Gastrocnemius medialis (tissue), 4 donors: ENCODE measurements at regions of chr2 and their contacts with region 1.

Region 1: DNA sequence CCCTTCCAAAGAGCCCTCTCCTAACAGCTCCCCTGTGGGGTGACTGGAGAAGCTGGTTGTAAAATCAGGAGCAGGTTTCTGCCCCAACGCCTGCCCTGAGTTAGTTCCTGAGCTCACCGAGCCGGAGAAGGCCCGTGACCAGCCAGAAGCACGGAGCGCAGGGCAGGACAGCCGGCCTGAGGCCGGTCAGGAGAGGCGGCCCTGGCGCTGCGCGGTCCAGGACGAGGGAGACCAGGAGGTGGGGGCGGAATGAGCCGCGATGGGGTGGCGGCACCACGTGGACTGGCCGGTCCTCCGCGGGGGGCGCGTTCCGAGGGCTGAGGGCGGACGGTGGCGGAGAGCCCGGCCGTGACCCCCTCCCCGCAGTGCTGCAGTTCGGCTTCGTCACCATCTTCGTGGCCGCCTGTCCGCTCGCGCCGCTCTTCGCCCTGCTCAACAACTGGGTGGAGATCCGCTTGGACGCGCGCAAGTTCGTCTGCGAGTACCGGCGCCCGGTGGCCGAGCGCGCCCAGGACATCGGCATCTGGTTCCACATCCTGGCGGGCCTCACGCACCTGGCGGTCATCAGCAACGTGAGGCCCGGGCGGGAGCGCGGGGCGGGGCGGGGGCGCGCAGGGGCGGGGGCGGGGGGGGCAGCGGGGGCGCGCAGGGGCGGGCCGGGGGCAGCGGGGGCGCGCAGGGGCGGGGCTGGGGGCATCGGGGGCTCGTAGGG is 29.0 kb downstream of the ANO7 start:
- DNase-seq: peak; percentile 29 to 74
- ATAC-seq: peak; percentile 69 to 81
- H3K4me3 ChIP-seq: peak overlapping the region; percentile 57 to 69 (median 63)
- H3K27ac ChIP-seq: peak overlapping the region; percentile 73 to 94 (median 79)
- H3K4me1 ChIP-seq: peaks cover 4 to 16% of the 10 kb centered on the region in 2 donors
- H3K27me3 ChIP-seq: no peaks in the 10 kb centered on the region
- CTCF ChIP-seq: peak in 1 of 5 experiments; percentile 13
- POLR2A ChIP-seq: no peak

Region 2: DNA sequence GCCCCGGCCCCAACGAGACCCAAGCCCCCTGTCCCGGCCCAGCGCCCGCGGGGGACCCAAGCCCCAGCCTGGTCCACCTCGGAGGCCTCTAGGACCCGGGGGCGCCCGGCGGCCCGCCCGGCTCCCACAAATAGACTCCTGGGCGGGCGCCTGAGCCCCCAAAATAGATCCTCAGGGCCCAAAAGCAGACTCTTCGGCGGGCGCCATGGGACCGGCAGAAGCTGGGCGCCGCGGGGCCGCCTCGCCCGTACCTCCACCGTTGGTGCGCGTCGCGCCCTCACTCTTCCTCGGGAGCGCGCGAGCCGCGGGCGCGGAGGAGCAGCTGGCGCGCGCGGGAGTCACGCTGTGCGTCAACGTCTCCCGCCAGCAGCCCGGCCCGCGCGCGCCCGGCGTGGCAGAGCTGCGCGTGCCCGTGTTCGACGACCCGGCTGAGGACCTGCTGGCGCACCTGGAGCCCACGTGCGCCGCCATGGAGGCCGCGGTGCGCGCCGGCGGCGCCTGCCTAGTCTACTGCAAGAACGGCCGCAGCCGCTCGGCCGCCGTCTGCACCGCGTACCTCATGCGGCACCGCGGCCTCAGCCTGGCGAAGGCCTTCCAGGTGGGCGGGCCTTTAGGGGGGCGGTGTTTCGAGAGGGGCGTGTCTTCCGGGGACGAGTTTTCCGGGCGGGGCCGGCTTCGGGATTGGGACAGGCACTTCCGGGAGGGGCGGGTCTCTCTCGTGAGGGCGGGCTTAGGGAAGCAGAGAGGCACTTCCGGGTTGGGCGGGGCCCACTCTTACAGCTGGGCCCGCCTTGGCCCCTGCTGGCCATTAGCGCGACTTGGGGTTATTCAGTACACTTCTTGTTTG is 656.8 kb before region 1 on chr2:
- in situ Hi-C with region 1: no loop called
- intact Hi-C with region 1: loop called (anchors 5 kb)
- DNase-seq: peak; percentile 99
- ATAC-seq: peak; percentile 85 to 86
- H3K4me3 ChIP-seq: peak overlapping the region; percentile 77 to 94 (median 88)
- H3K27ac ChIP-seq: peak overlapping the region; percentile 97 to 100 (median 100)
- H3K4me1 ChIP-seq: peaks cover 31 to 40% of the 10 kb centered on the region in 2 donors
- H3K27me3 ChIP-seq: no peaks in the 10 kb centered on the region
- CTCF ChIP-seq: peak in 2 of 5 experiments; percentile 49 to 60
- POLR2A ChIP-seq: peak; percentile 86 to 91

Region 3: DNA sequence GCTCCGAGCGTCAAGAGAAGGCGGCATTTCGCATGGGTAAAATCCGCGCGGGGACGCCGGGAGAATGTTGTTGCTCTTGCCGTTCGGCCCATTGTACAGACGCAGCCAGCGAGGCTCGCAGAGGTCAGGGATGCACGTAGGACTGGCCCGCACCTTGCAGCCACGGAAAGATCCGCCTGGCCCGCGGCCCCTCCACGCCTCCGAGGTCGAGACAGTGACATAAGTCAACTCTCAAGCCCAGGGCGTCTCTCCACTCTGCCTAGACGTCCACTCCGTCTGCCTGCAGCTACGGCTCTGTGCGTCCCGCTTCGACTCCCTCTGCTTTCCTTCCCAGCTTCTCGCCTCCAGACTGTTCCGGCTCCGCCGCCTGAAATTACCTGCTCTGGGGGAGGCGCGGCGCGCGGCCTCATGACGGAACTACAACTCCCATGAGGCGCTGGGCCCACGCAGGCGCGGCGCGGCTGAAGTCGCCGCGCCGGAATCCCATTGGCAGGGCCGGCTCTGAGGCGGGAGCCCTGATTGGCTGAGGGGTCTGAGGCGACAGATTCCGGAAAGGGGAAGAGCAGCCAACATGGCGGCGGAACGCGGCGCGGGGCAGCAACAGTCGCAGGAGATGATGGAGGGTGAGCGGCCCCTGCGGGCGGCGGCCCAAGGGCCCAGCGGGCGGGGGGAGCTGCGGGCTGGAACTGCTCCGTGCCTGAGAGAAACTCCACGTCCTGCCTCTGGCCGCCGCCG is 67.4 kb before region 1 on chr2 and contains the start of gene PPP1R7:
- in situ Hi-C with region 1: no loop called
- intact Hi-C with region 1: loop called (anchors 2 kb)
- DNase-seq: peak; percentile 90 to 93
- ATAC-seq: peak; percentile 87 to 91
- H3K4me3 ChIP-seq: peak within 1 kb of the TSS; percentile 72 to 99 (median 83)
- H3K27ac ChIP-seq: peak within 1 kb of the TSS; percentile 78 to 93 (median 84)
- H3K4me1 ChIP-seq: peaks cover 13 to 15% of the 10 kb centered on the region in 2 donors
- H3K27me3 ChIP-seq: no peaks in the 10 kb centered on the region
- CTCF ChIP-seq: no peak
- POLR2A ChIP-seq: peak; percentile 78 to 82
- total RNA-seq, gene PPP1R7: 58.6 to 87.8 (median 67.2) TPM

Region 4: GRCh38 chr2:241271641-241272297 is 54.3 kb after region 1 on chr2:
- in situ Hi-C with region 1: no loop called
- intact Hi-C with region 1: loop called (anchors 5 kb)
- DNase-seq: peak; percentile 80 to 81
- ATAC-seq: peak; percentile 88 to 90
- H3K4me3 ChIP-seq: peak overlapping the region; percentile 67 to 93 (median 73)
- H3K27ac ChIP-seq: peak overlapping the region; percentile 83 to 97 (median 92)
- H3K4me1 ChIP-seq: peaks cover 42 to 43% of the 10 kb centered on the region in 2 donors
- H3K27me3 ChIP-seq: no peaks in the 10 kb centered on the region
- CTCF ChIP-seq: no peak
- POLR2A ChIP-seq: peak in 1 of 2 donors; percentile 46

Region 5: DNA sequence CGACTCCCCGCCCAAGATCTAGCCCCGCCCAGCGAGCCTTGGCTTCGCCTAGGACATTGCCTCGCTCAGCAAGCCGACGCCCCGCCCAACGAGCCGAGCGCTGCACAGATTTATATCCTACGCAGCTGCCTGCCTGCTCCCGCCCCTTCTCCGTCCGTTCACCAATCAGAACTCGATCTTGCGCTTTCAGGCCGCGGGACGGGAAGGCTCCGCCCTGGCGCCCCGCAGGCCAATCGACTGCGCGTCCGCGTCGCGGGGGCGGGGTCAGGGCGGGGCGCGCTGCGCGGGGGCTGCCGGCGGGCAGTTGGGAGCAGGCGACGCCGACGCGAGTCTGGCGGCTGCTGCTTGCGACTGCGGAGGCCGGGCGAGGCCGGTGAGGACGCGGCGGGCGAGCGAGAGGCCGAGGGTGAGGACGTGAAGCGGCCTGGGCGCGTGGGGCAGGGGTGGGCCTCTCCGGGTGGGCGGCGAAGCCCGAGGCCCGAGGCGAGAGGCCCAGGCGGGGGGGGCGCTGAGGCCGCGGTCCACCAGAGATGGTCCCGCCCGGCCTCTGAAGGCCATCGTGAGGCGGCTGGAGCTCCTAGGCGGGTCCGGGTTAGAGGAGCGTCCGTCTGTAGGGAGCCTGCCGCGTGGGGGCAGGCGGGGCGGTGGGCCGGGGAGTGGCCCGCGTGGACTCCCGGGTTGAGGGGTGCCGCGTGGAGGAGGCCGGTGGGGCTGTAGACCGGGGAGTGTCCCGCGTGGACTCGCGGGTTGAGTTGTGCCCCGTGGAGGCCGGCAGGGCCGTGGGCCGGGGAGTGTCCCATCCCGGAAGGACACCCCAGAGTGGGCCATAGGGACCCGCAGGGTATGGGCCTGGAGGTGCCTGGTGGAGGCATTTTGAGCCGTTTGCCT is 138.8 kb after region 1 on chr2 and contains the start of gene FARP2:
- in situ Hi-C with region 1: no loop called
- intact Hi-C with region 1: loop called (anchors 5 kb)
- DNase-seq: peak; percentile 99
- ATAC-seq: peak; percentile 92 to 96
- H3K4me3 ChIP-seq: peak within 1 kb of the TSS; percentile 70 to 85 (median 82)
- H3K27ac ChIP-seq: peak within 1 kb of the TSS; percentile 80 to 95 (median 92)
- H3K4me1 ChIP-seq: peaks cover 23 to 30% of the 10 kb centered on the region in 2 donors
- H3K27me3 ChIP-seq: no peaks in the 10 kb centered on the region
- CTCF ChIP-seq: no peak
- POLR2A ChIP-seq: peak; percentile 87 to 88
- total RNA-seq, gene FARP2: 10.7 to 20.1 (median 13.6) TPM

Region 6: GRCh38 chr2:241909769-241910168 is 692.3 kb after region 1 on chr2:
- in situ Hi-C with region 1: no loop called
- intact Hi-C with region 1: no loop called
- DNase-seq: no peak
- ATAC-seq: no peak
- H3K4me3 ChIP-seq: no peak overlapping the region
- H3K27ac ChIP-seq: no peak overlapping the region
- H3K4me1 ChIP-seq: no peaks in the 10 kb centered on the region
- H3K27me3 ChIP-seq: no peaks in the 10 kb centered on the region
- CTCF ChIP-seq: no peak
- POLR2A ChIP-seq: no peak